Tibial artery (tissue), 4 donors: ENCODE measurements at regions of chr10 and their contacts with region 1.

Region 1: GRCh38 chr10:29895456-29895855 is 163.9 kb downstream of the JCAD start:
- DNase-seq: peak; percentile 84 to 92
- H3K4me3 ChIP-seq: peak overlapping the region in 1 of 2 donors; percentile 3
- H3K27ac ChIP-seq: peak overlapping the region; percentile 75 to 78
- H3K4me1 ChIP-seq: peaks cover 0 to 45% (median 18%) of the 10 kb centered on the region in 4 donors
- H3K27me3 ChIP-seq: no peaks in the 10 kb centered on the region
- CTCF ChIP-seq: no peak

Region 2: GRCh38 chr10:29946953-29947700 is 51.7 kb after region 1 on chr10:
- intact Hi-C with region 1: loop called (anchors 10 kb)
- DNase-seq: peak; percentile 84 to 93
- H3K4me3 ChIP-seq: peak overlapping the region; percentile 18 to 27
- H3K27ac ChIP-seq: peak overlapping the region; percentile 82 to 87
- H3K4me1 ChIP-seq: peaks cover 0 to 64% (median 50%) of the 10 kb centered on the region in 4 donors
- H3K27me3 ChIP-seq: no peaks in the 10 kb centered on the region
- CTCF ChIP-seq: no peak